A673 (cell line): ENCODE measurements at regions of chr14 and their contacts with region 1.

Region 1: GRCh38 chr14:92726429-92727262 is 21.8 kb downstream of the LGMN start:
- DNase-seq: no peak
- H3K4me3 ChIP-seq: no peak overlapping the region
- H3K27ac ChIP-seq: no peak overlapping the region
- H3K4me1 ChIP-seq: peaks cover 5% of the 10 kb centered on the region
- H3K27me3 ChIP-seq: no peaks in the 10 kb centered on the region
- CTCF ChIP-seq: no peak

Region 2: DNA sequence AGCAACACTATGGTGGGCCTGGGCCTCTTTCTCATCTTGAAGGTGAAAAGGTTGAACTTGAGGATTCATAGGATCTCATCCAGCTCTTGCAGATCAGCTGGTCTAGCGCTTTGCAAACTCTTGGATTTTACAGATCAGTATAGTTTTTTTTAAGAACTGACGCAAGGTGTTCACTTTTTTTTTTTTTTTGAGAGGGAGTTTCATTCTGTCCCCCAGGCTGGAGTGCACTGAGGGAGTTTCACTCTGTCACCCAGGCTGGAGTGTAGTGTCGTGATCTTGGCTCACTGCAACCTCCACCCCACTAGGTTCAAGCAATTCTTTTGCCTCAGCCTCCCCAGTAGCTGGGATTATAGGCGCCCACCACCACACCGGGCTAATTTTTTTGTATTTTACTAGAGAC is 42.1 kb after region 1 on chr14:
- CTCF ChIA-PET with region 1: no interaction called
- POLR2A ChIA-PET with region 1: interaction called, 15 read pairs
- intact Hi-C with region 1: no loop called
- DNase-seq: no peak
- H3K4me3 ChIP-seq: no peak overlapping the region
- H3K27ac ChIP-seq: no peak overlapping the region
- H3K4me1 ChIP-seq: no peaks in the 10 kb centered on the region
- H3K27me3 ChIP-seq: no peaks in the 10 kb centered on the region
- CTCF ChIP-seq: no peak